CD4-positive, alpha-beta T cell (primary cell): ENCODE measurements at regions of chr7 and their contacts with region 1.

Region 1: GRCh38 chr7:129091484-129092002 is 36.6 kb upstream of the TNPO3 start:
- DNase-seq: peak; percentile 72 to 92 (median 86)
- ATAC-seq: peak; percentile 80
- H3K4me3 ChIP-seq: no peak overlapping the region
- H3K4me3 Mint-ChIP-seq: no peak overlapping the region
- H3K27ac ChIP-seq: no peak overlapping the region
- H3K27ac Mint-ChIP-seq: no peak overlapping the region
- H3K4me1 ChIP-seq: peaks cover 20% of the 10 kb centered on the region
- H3K4me1 Mint-ChIP-seq: peaks cover 26% of the 10 kb centered on the region
- H3K27me3 ChIP-seq: no peaks in the 10 kb centered on the region
- H3K27me3 Mint-ChIP-seq: no peaks in the 10 kb centered on the region
- CTCF ChIP-seq: peak; percentile 97

Region 2: DNA sequence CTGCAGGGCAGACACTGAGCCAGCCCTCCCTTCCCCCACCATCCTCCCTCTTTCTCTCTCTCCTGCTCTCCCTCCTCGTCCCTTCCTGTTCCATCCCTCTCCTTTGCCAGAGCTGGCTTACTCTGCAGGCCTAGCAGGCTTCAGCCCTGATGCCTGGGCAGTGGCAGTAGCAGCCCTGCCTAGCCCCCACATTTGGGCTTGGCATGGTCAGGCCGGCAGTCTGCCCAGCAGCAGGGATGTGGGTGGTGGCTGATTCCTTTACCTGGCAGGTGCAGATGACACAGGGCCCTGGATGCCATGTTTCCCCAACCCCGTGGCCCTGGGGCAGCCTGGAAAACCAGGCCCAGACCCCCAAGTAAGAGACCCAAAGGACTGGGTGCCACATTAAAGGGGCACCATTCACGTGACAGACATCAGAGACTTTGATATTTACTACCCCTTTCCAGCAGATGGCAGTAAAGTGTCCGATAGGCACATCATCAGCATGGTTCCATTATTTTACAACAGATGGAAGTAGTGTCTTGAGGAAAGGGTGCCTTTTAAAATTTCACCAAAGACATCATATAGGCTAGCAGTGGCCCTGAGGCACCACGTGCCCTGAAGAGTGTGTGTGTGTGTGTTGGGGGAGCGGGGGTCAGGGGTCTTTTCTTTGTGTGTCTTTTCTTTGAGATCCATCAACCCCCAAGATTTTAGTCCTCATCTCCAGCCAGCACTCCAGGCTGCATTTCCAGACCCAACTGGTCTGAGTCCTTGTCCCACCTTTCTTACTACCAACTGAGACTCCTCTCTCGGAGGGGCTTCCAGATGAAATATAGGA is 187.0 kb before region 1 on chr7:
- CTCF ChIA-PET with region 1: interaction called, 4 read pairs
- POLR2A ChIA-PET with region 1: no interaction called
- intact Hi-C with region 1: loop called (anchors 1 kb)
- DNase-seq: peak in 4 of 14 experiments; percentile 28 to 79 (median 75)
- ATAC-seq: peak; percentile 78
- H3K4me3 ChIP-seq: no peak overlapping the region
- H3K4me3 Mint-ChIP-seq: no peak overlapping the region
- H3K27ac ChIP-seq: no peak overlapping the region
- H3K27ac Mint-ChIP-seq: no peak overlapping the region
- H3K4me1 ChIP-seq: peaks cover 7% of the 10 kb centered on the region
- H3K4me1 Mint-ChIP-seq: no peaks in the 10 kb centered on the region
- H3K27me3 ChIP-seq: peaks cover 8% of the 10 kb centered on the region in 2 experiments
- H3K27me3 Mint-ChIP-seq: peaks cover 56% of the 10 kb centered on the region
- CTCF ChIP-seq: peak; percentile 65

Region 3: GRCh38 chr7:129017933-129018538 is 73.5 kb before region 1 on chr7:
- CTCF ChIA-PET with region 1: interaction called, 3 read pairs
- POLR2A ChIA-PET with region 1: interaction called, 4 read pairs
- intact Hi-C with region 1: loop called in 1 of 2 experiments (anchors 10 kb)
- DNase-seq: no peak
- ATAC-seq: no peak
- H3K4me3 ChIP-seq: no peak overlapping the region
- H3K4me3 Mint-ChIP-seq: no peak overlapping the region
- H3K27ac ChIP-seq: no peak overlapping the region
- H3K27ac Mint-ChIP-seq: no peak overlapping the region
- H3K4me1 ChIP-seq: no peaks in the 10 kb centered on the region
- H3K4me1 Mint-ChIP-seq: peaks cover 38% of the 10 kb centered on the region
- H3K27me3 ChIP-seq: no peaks in the 10 kb centered on the region
- H3K27me3 Mint-ChIP-seq: no peaks in the 10 kb centered on the region
- CTCF ChIP-seq: no peak

Region 4: GRCh38 chr7:129530795-129531391 is 439.4 kb after region 1 on chr7:
- CTCF ChIA-PET with region 1: no interaction called
- POLR2A ChIA-PET with region 1: no interaction called
- intact Hi-C with region 1: no loop called
- DNase-seq: peak in 3 of 14 experiments; percentile 14 to 28 (median 16)
- ATAC-seq: no peak
- H3K4me3 ChIP-seq: no peak overlapping the region
- H3K4me3 Mint-ChIP-seq: no peak overlapping the region
- H3K27ac ChIP-seq: no peak overlapping the region
- H3K27ac Mint-ChIP-seq: no peak overlapping the region
- H3K4me1 ChIP-seq: peaks cover 7% of the 10 kb centered on the region
- H3K4me1 Mint-ChIP-seq: peaks cover 2% of the 10 kb centered on the region
- H3K27me3 ChIP-seq: no peaks in the 10 kb centered on the region
- H3K27me3 Mint-ChIP-seq: no peaks in the 10 kb centered on the region
- CTCF ChIP-seq: no peak